GM18951 (cell line): ENCODE measurements at regions of chr2 and their contacts with region 1.

Region 1: GRCh38 chr2:177164584-177165052 is 48.0 kb upstream of the HNRNPA3 start:
- POLR2A ChIP-seq: no peak

Region 2: DNA sequence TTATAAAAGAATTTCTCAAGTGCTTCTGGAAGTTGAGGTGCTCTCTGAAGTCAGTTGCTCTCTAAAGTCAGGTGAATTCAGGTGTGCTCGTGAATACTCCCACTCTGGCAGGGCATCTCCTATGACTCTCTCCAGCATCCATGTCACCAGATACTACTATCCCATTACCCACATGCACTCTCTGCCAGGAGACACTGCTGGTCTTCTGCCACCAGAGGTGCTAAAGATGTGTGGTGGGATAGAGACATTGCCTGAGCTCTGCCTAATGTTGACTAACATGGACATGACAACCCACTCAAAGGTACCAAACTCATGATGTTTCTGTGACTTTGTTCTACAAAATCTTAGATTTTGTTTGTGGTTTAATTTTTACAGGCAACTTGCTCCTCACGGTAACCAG is 58.4 kb before region 1 on chr2:
- in situ Hi-C with region 1: no loop called
- POLR2A ChIP-seq: no peak

Region 3: GRCh38 chr2:177296040-177296439 is 131.4 kb after region 1 on chr2:
- in situ Hi-C with region 1: loop called (anchors 10 kb)
- POLR2A ChIP-seq: no peak

Region 4: DNA sequence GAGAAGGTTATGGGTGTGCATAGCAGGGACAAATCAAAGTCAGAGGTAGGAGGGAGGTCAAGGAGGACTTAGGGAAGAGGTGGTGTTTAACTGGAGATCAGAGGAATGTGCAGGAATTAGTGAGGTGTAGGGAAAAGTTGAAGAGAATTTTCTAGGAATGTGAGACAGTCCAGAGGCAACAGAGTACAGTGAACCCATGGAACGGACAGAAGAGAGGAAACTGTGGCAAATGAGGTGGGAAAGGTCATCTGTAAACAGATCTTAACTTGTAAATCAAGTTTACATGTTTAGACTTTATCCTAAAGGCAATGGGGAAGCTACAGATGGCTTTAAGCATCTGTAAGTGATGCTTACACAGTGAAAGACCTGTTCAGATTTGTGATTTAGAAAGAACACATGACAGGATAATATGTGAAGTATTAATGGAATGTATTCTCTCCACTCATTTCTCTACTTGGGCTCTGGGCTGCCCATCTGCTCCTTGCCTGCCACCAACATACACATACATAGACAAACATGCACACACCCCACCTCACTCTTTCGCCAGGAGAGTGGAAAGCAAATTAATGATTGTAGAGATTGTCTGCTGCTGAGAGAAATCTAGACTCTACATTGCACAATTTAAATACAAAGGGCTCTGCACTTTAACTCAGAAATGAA is 160.8 kb after region 1 on chr2:
- in situ Hi-C with region 1: loop called (anchors 10 kb)
- POLR2A ChIP-seq: no peak

Region 5: DNA sequence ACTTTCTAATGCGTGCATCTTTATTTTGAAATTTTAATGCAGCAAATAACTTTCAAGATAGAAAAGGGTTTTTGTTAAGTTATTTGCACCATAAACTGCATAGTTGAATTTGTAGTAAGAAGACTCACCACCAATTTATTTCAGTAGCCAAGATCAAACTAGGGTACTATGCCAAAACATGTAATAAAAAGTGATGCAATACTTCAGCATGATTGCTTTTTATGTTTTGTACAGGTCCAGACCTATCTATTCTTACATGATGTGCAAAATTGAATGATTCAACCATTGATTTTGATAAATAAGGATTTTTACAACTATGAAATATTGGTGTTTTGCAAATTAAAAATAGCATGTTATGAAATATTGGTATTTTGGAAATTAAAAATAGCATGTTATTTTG is 254.7 kb after region 1 on chr2:
- in situ Hi-C with region 1: loop called (anchors 10 kb)
- POLR2A ChIP-seq: no peak

Region 6: GRCh38 chr2:177724398-177725287 is 560.0 kb after region 1 on chr2:
- in situ Hi-C with region 1: loop called (anchors 25 kb)
- POLR2A ChIP-seq: no peak